Activated CD8-positive, alpha-beta T cell treated with anti-CD3 and anti-CD28 coated beads, Interleukin-2, amount 10 ng/mL, durations not matched to agents 7 days and 5 days (primary cell): ENCODE measurements at regions of chr18 and their contacts with region 1.

Region 1: GRCh38 chr18:49238433-49239042 is 221.9 kb downstream of the DYM start:
- DNase-seq: peak; percentile 48
- ATAC-seq: no peak
- H3K4me3 Mint-ChIP-seq: no peak overlapping the region
- H3K27ac Mint-ChIP-seq: no peak overlapping the region
- H3K4me1 Mint-ChIP-seq: no peaks in the 10 kb centered on the region
- H3K27me3 Mint-ChIP-seq: no peaks in the 10 kb centered on the region

Region 2: DNA sequence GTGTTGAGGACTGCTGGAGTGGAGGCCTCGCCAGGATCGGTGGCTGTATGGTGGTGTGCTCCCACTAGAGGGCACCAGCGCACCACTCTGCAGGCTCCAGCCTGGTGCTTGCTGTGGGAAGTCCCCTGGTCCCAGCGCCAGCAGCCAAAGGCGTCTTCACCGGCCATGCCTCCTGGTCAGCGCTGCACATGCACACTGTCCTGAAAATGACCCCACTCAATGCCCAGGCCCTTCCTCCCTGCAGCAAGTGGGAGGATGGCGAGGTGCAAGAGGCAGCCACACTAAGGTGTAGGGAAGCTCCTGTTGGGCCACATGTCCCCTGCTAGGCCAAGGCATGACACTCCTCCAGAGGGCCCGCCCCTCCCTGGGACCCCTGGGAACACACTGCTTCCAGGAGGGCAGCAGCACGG is 563.2 kb before region 1 on chr18:
- CTCF ChIA-PET with region 1: interaction called, 21 read pairs
- POLR2A ChIA-PET with region 1: no interaction called
- DNase-seq: peak; percentile 88
- ATAC-seq: peak; percentile 95
- H3K4me3 Mint-ChIP-seq: no peak overlapping the region
- H3K27ac Mint-ChIP-seq: no peak overlapping the region
- H3K4me1 Mint-ChIP-seq: peaks cover 13% of the 10 kb centered on the region
- H3K27me3 Mint-ChIP-seq: no peaks in the 10 kb centered on the region

Region 3: GRCh38 chr18:49041435-49042245 is 196.9 kb before region 1 on chr18:
- CTCF ChIA-PET with region 1: interaction called, 10 read pairs
- POLR2A ChIA-PET with region 1: no interaction called
- DNase-seq: peak; percentile 71
- ATAC-seq: no peak
- H3K4me3 Mint-ChIP-seq: no peak overlapping the region
- H3K27ac Mint-ChIP-seq: no peak overlapping the region
- H3K4me1 Mint-ChIP-seq: peaks cover 12% of the 10 kb centered on the region
- H3K27me3 Mint-ChIP-seq: no peaks in the 10 kb centered on the region

Region 4: GRCh38 chr18:49111191-49111988 is 127.1 kb before region 1 on chr18:
- CTCF ChIA-PET with region 1: no interaction called
- POLR2A ChIA-PET with region 1: no interaction called
- DNase-seq: no peak
- ATAC-seq: no peak
- H3K4me3 Mint-ChIP-seq: no peak overlapping the region
- H3K27ac Mint-ChIP-seq: no peak overlapping the region
- H3K4me1 Mint-ChIP-seq: peaks cover 13% of the 10 kb centered on the region
- H3K27me3 Mint-ChIP-seq: no peaks in the 10 kb centered on the region

Region 5: GRCh38 chr18:49151482-49151881 is 87.1 kb before region 1 on chr18:
- CTCF ChIA-PET with region 1: no interaction called
- POLR2A ChIA-PET with region 1: no interaction called
- DNase-seq: no peak
- ATAC-seq: no peak
- H3K4me3 Mint-ChIP-seq: no peak overlapping the region
- H3K27ac Mint-ChIP-seq: no peak overlapping the region
- H3K4me1 Mint-ChIP-seq: no peaks in the 10 kb centered on the region
- H3K27me3 Mint-ChIP-seq: no peaks in the 10 kb centered on the region

Region 6: DNA sequence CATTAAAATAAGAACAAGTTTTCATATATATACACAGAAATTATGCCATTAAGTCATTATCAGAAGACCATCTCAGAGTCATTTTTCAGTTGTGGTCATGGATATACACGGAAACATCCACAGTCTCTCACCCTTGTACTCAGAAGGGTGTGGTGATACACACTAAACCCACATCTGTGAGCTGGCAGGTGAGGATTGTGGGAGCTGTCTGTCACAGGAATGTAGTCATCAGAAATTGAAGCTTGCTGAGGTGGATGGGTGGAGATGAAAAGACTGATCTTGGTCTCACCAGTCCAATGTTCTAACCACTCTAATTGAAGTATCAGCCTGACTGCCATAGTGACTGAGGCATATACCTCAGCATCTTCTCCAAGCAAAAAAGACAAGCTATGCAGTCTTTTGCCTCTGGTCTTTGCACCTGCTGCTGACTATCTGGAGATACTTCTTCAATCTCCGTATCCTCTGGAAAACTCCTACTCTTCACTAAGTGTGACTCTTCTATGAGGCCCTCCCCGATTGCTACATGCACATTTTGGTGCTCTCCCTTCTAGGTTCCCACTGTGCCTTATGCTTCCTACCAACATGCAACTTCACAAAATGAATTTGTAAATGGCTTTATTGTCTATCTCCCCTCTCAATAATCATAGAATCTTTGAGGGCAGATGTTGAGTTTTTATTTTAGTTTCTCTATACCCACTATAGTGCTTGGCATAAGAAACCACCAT is 10.9 kb before region 1 on chr18:
- CTCF ChIA-PET with region 1: interaction called, 11 read pairs
- POLR2A ChIA-PET with region 1: interaction called, 3 read pairs
- DNase-seq: peak; percentile 80
- ATAC-seq: peak; percentile 97
- H3K4me3 Mint-ChIP-seq: no peak overlapping the region
- H3K27ac Mint-ChIP-seq: peak overlapping the region; percentile 22
- H3K4me1 Mint-ChIP-seq: peaks cover 27% of the 10 kb centered on the region
- H3K27me3 Mint-ChIP-seq: no peaks in the 10 kb centered on the region